ENCODE measurements at regions of chr12 and their contacts with region 1.

Region 1: DNA sequence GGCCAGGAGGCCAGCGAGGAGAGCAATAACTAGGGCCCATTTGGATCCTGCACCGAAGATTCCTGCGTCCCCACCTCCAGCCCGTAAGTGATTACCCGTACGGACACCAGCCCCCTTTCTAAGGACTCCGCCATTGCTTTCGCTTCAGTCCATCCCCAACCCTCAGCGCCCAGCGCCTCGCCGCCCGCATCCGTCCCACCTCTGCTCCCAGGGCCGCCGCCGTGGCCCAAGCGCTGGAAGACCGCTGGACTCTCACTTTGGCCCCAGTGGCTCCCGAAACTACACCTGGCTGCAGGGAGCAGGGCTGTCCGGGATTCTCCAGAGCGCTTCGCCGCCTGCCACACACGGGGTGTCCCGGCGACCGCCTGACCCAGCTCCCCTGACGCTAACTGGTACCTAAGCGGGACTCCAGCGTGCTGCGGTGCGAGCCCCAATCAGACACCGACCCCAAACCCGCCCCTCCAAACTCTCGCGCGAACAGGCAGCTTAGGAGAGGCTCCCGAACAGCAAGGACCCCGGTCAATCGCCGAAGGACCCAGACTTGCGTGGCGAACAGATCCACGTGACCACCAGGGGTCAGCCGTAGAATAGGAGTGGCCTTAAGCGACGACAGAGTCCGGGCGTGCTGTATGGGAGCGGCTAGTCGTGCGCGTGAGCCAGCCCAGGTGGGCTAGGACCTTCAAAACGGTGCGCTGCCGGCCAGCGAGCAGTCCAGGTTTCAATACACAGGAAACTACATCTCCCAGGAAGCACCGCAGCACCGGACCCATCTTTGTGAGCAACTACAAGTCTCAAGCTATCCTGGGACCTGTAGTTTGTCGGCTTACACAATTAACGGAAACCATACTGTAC is at the start of gene CNPY2:
- DNase-seq: peak; percentile 98
- ATAC-seq: peak; percentile 91
- H3K4me3 Mint-ChIP-seq: peak within 1 kb of the TSS; percentile 85
- H3K27ac Mint-ChIP-seq: peak within 1 kb of the TSS; percentile 92
- H3K4me1 Mint-ChIP-seq: peaks cover 9% of the 10 kb centered on the region
- H3K27me3 Mint-ChIP-seq: no peaks in the 10 kb centered on the region
- CTCF ChIP-seq: no peak
- total RNA-seq, gene CNPY2: 81.0 to 81.7 TPM

Region 2: GRCh38 chr12:56007564-56008559 is 308.0 kb before region 1 on chr12:
- CTCF ChIA-PET with region 1: no interaction called
- POLR2A ChIA-PET with region 1: no interaction called
- intact Hi-C with region 1: no loop called
- DNase-seq: peak; percentile 68
- ATAC-seq: peak; percentile 84
- H3K4me3 Mint-ChIP-seq: peak overlapping the region; percentile 85
- H3K27ac Mint-ChIP-seq: peak overlapping the region; percentile 89
- H3K4me1 Mint-ChIP-seq: peaks cover 41% of the 10 kb centered on the region
- H3K27me3 Mint-ChIP-seq: no peaks in the 10 kb centered on the region
- CTCF ChIP-seq: no peak

Region 3: GRCh38 chr12:56299853-56300643 is 15.8 kb before region 1 on chr12 and contains the start of gene CS:
- CTCF ChIA-PET with region 1: no interaction called
- POLR2A ChIA-PET with region 1: interaction called, 12 read pairs
- intact Hi-C with region 1: no loop called
- DNase-seq: peak; percentile 99
- ATAC-seq: peak; percentile 99
- H3K4me3 Mint-ChIP-seq: peak within 1 kb of the TSS; percentile 93
- H3K27ac Mint-ChIP-seq: peak within 1 kb of the TSS; percentile 94
- H3K4me1 Mint-ChIP-seq: peaks cover 43% of the 10 kb centered on the region
- H3K27me3 Mint-ChIP-seq: no peaks in the 10 kb centered on the region
- CTCF ChIP-seq: no peak
- total RNA-seq, gene CS: 292 to 297 TPM